CD8-positive, alpha-beta T cell (primary cell): ENCODE measurements at regions of chr14 and their contacts with region 1.

Region 1: DNA sequence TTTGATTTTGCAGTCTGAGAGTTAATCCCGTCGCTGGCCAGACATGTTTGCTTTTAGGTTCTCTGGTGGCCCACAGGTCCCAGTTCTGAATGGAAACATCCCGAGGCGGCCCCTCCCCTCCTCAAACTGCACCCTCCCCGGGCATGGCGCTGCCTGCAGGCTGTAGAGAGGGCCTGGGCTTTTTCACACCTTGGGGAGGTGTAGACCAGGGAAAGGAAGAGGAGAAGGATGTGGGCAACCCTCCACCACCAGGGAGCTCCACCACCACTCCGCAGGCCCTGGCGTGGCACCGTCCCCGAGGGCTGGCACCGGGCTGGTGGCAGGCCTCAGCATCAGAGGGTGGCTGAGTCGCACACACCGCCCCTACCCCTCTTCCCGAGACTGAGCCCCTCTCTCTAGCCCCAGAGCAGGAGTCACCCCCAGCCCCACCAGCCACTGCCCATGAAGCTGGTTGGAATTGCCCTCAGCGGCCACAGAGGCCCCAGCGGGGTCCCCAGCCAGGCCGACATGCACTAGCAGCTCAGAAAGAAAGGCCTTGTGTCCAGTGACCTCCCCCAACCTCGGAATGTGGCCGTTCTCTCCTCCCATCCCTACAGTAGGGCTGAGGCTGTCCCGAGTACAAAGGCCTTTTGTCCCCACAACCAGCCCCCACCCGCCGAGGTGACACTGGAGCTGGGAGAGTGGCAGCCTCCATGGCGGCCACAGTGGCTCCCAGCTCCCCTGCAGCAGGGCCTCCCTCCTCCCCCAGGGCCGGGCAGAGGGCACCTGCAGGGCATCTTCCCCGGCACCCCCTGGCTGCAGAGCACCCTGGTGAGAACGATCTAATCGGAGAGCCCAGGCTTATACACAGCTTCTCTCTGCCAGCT is 23.5 kb upstream of the INF2 start:
- DNase-seq: peak in 8 of 9 experiments; percentile 29 to 80 (median 54)
- ATAC-seq: peak; percentile 93
- H3K4me3 ChIP-seq: no peak overlapping the region
- H3K4me3 Mint-ChIP-seq: no peak overlapping the region
- H3K27ac ChIP-seq: no peak overlapping the region
- H3K27ac Mint-ChIP-seq: peak overlapping the region; percentile 62
- H3K4me1 ChIP-seq: peaks cover 14% of the 10 kb centered on the region
- H3K4me1 Mint-ChIP-seq: peaks cover 16% of the 10 kb centered on the region
- H3K27me3 ChIP-seq: peaks cover 0 to 12% of the 10 kb centered on the region in 2 experiments
- H3K27me3 Mint-ChIP-seq: peaks cover 6% of the 10 kb centered on the region
- CTCF ChIP-seq: peak; percentile 45

Region 2: DNA sequence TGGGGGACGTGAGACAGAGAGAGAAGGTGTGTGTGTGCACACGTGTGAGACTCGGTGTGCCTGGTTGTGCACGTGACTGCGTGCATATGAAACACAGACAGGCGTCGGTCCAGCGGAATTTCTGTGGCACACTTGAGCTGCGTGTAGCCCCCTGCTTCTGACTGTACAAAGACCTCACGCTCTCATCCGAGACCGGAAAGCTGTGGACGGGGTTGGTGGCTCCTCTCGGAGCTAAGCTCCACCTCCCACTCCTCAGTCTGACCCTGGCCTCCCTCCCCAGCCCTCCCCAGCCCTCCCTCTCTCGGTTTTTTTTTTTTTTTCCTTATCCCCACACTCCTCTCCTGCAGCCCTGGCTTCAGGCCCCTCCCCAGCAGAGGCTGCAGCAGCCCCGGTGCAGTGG is 94.6 kb before region 1 on chr14:
- CTCF ChIA-PET with region 1: no interaction called
- POLR2A ChIA-PET with region 1: no interaction called
- intact Hi-C with region 1: no loop called
- DNase-seq: no peak
- ATAC-seq: no peak
- H3K4me3 ChIP-seq: no peak overlapping the region
- H3K4me3 Mint-ChIP-seq: no peak overlapping the region
- H3K27ac ChIP-seq: no peak overlapping the region
- H3K27ac Mint-ChIP-seq: no peak overlapping the region
- H3K4me1 ChIP-seq: no peaks in the 10 kb centered on the region
- H3K4me1 Mint-ChIP-seq: no peaks in the 10 kb centered on the region
- H3K27me3 ChIP-seq: no peaks in the 10 kb centered on the region
- H3K27me3 Mint-ChIP-seq: no peaks in the 10 kb centered on the region
- CTCF ChIP-seq: no peak

Region 3: GRCh38 chr14:104677512-104678332 is 11.8 kb after region 1 on chr14:
- CTCF ChIA-PET with region 1: interaction called, 8 read pairs
- POLR2A ChIA-PET with region 1: interaction called, 9 read pairs
- intact Hi-C with region 1: loop called in 1 of 2 experiments (anchors 1 kb)
- DNase-seq: peak in 8 of 9 experiments; percentile 42 to 80 (median 64)
- ATAC-seq: peak; percentile 83
- H3K4me3 ChIP-seq: peak overlapping the region; percentile 63 to 73
- H3K4me3 Mint-ChIP-seq: peak overlapping the region; percentile 81
- H3K27ac ChIP-seq: no peak overlapping the region
- H3K27ac Mint-ChIP-seq: peak overlapping the region; percentile 67
- H3K4me1 ChIP-seq: peaks cover 17% of the 10 kb centered on the region
- H3K4me1 Mint-ChIP-seq: peaks cover 15% of the 10 kb centered on the region
- H3K27me3 ChIP-seq: peaks cover 0 to 9% of the 10 kb centered on the region in 2 experiments
- H3K27me3 Mint-ChIP-seq: no peaks in the 10 kb centered on the region
- CTCF ChIP-seq: no peak

Region 4: DNA sequence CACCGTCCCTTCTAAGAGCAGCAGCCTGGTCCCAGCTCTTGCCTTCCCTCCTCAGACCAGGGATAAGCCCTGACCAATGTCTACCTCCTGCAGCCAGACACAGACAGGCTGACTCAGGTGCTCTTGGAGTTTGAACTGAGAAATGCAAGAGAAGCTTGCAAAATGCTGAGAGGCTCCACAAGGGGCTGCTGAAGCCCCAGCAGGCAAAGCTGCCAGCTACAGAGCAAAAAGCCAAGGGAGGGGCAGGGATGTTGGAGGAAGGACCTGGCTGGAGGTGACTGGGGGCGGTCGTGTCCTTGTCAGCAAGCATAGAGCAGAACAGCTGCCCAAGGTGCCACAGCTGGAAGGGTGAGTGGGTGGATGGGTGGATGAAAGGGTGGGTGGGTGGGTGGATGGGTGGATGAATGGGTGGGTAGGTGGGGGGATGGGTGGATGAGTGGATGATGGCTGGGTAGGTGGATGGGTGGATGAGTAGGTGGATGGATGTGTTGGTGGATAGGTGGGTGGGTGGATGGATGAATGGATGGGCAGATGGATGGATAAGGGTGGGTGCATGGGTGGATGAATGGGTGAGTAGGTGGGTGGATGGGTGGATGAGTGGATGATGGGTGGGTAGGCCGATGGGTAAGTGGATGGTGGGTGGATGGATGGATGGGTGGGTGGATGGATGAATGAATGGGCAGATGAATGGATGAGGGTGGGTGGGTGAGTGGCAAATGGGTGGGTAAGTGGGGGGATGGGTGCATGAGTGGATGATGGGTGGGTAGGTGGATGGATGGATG is 19.5 kb after region 1 on chr14:
- CTCF ChIA-PET with region 1: interaction called, 8 read pairs
- POLR2A ChIA-PET with region 1: interaction called, 3 read pairs
- intact Hi-C with region 1: loop called in 1 of 2 experiments (anchors 1 kb)
- DNase-seq: peak in 1 of 9 experiments; percentile 29
- ATAC-seq: no peak
- H3K4me3 ChIP-seq: no peak overlapping the region
- H3K4me3 Mint-ChIP-seq: no peak overlapping the region
- H3K27ac ChIP-seq: no peak overlapping the region
- H3K27ac Mint-ChIP-seq: peak overlapping the region; percentile 52
- H3K4me1 ChIP-seq: peaks cover 39% of the 10 kb centered on the region
- H3K4me1 Mint-ChIP-seq: peaks cover 29% of the 10 kb centered on the region
- H3K27me3 ChIP-seq: no peaks in the 10 kb centered on the region
- H3K27me3 Mint-ChIP-seq: no peaks in the 10 kb centered on the region
- CTCF ChIP-seq: no peak

Region 5: GRCh38 chr14:104694991-104695659 is 29.2 kb after region 1 on chr14:
- CTCF ChIA-PET with region 1: interaction called, 15 read pairs
- POLR2A ChIA-PET with region 1: interaction called, 4 read pairs
- intact Hi-C with region 1: no loop called
- DNase-seq: peak in 7 of 9 experiments; percentile 34 to 82 (median 56)
- ATAC-seq: peak; percentile 75
- H3K4me3 ChIP-seq: peak overlapping the region; percentile 7 to 17
- H3K4me3 Mint-ChIP-seq: peak overlapping the region; percentile 71
- H3K27ac ChIP-seq: peak overlapping the region; percentile 61 to 78
- H3K27ac Mint-ChIP-seq: peak overlapping the region; percentile 94
- H3K4me1 ChIP-seq: peaks cover 61% of the 10 kb centered on the region
- H3K4me1 Mint-ChIP-seq: peaks cover 45% of the 10 kb centered on the region
- H3K27me3 ChIP-seq: no peaks in the 10 kb centered on the region
- H3K27me3 Mint-ChIP-seq: no peaks in the 10 kb centered on the region
- CTCF ChIP-seq: no peak

Region 6: GRCh38 chr14:104708606-104709268 is 42.8 kb after region 1 on chr14:
- CTCF ChIA-PET with region 1: interaction called, 20 read pairs
- POLR2A ChIA-PET with region 1: no interaction called
- intact Hi-C with region 1: loop called (anchors 1 kb)
- DNase-seq: peak; percentile 53 to 84 (median 73)
- ATAC-seq: peak; percentile 98
- H3K4me3 ChIP-seq: no peak overlapping the region
- H3K4me3 Mint-ChIP-seq: no peak overlapping the region
- H3K27ac ChIP-seq: no peak overlapping the region
- H3K27ac Mint-ChIP-seq: no peak overlapping the region
- H3K4me1 ChIP-seq: no peaks in the 10 kb centered on the region
- H3K4me1 Mint-ChIP-seq: peaks cover 2% of the 10 kb centered on the region
- H3K27me3 ChIP-seq: no peaks in the 10 kb centered on the region
- H3K27me3 Mint-ChIP-seq: no peaks in the 10 kb centered on the region
- CTCF ChIP-seq: peak; percentile 94